GM23248 (cell line): ENCODE measurements at regions of chr22 and their contacts with region 1.

Region 1: DNA sequence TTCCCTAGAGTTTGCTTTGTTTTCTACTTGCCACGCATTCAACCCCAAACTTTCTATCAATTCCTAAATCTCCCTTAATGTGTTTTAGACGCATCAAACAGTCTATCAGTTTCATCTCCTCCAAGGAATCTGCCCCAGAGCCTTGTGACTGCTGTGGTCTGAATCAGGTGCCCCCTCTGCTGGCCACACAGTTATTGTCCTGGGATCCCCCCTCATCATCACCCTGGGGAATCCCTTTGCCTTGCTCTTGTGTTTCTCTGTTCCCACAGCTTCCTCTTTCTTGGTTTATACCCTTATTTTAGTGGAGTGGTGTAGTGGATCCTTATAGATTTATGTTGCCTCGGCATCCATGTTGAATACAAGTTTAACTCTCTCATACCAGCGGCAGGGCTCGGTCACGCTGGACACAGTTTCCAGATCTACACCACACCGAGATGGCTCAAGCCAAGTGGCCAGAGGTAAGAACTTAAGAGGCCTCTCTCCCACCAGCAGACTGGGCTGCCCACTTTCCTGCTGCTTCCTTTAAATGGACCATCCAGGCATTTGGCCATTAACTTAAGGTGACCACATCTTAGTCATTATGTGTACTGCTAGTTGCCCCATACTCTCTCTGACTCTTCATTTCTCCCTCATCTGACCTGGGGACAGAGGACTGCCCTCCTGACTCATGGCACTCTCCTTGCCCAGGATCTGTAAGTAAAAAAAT is 8.2 kb downstream of the UPB1 start:
- DNase-seq: peak; percentile 85
- H3K4me3 ChIP-seq: no peak overlapping the region
- H3K27ac ChIP-seq: no peak overlapping the region
- H3K4me1 ChIP-seq: peaks cover 7% of the 10 kb centered on the region; the same call in 1 of the 2 replicates
- H3K27me3 ChIP-seq: no peaks in the 10 kb centered on the region

Region 2: GRCh38 chr22:24410110-24410856 is 93.0 kb before region 1 on chr22:
- in situ Hi-C with region 1: loop called (anchors 10 kb)
- DNase-seq: peak; percentile 44
- H3K4me3 ChIP-seq: no peak overlapping the region
- H3K27ac ChIP-seq: no peak overlapping the region
- H3K4me1 ChIP-seq: no peaks in the 10 kb centered on the region
- H3K27me3 ChIP-seq: no peaks in the 10 kb centered on the region

Region 3: GRCh38 chr22:24751518-24751917 is 248.2 kb after region 1 on chr22:
- in situ Hi-C with region 1: no loop called
- DNase-seq: no peak
- H3K4me3 ChIP-seq: no peak overlapping the region
- H3K27ac ChIP-seq: no peak overlapping the region
- H3K4me1 ChIP-seq: no peaks in the 10 kb centered on the region
- H3K27me3 ChIP-seq: peaks cover 72% of the 10 kb centered on the region